Activated CD4-positive, alpha-beta memory T cell treated with anti-CD3 and anti-CD28 coated beads for 36 hours (primary cell): ENCODE measurements at regions of chr20 and their contacts with region 1.

Region 1: GRCh38 chr20:29443819-29444218 is 1813.6 kb upstream of the DEFB115 start:
- DNase-seq: peak; percentile 48
- H3K4me3 Mint-ChIP-seq: no peak overlapping the region
- H3K27ac Mint-ChIP-seq: no peak overlapping the region
- H3K4me1 Mint-ChIP-seq: peaks cover 10% of the 10 kb centered on the region
- H3K27me3 Mint-ChIP-seq: peaks cover 2% of the 10 kb centered on the region

Region 2: GRCh38 chr20:29763821-29764511 is 320.1 kb after region 1 on chr20:
- CTCF ChIA-PET with region 1: no interaction called
- POLR2A ChIA-PET with region 1: no interaction called
- intact Hi-C with region 1: loop called (anchors 10 kb)
- DNase-seq: no peak
- H3K4me3 Mint-ChIP-seq: no peak overlapping the region
- H3K27ac Mint-ChIP-seq: no peak overlapping the region
- H3K4me1 Mint-ChIP-seq: no peaks in the 10 kb centered on the region
- H3K27me3 Mint-ChIP-seq: peaks cover 3% of the 10 kb centered on the region

Region 3: DNA sequence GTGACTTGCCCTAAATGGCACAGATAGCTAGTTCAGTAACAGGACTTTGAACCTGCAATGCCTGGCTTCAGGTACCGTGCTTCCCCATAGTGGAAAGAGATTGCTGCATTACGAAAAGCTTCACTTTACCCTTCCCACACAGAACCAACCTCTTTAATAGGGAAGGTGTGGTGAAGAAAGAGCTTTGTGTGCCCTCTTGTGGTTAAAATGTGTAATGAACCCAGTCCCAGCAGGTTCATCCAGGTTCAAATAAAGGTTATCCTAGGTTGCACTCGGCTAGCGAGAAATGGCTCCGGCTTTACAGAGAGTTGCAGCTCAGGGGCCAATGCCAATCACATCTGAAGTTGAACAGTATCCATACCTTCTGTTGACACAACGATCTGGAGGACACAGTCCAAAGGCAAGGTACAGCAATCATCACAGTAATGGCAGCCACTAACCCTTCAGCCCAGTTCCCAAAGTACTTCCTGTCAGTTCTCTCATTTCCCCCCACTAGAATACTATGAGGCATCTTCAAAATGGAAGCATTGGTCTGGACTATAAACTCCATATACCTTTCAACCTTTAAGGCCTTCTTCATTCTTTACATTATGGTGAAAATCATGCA is 1816.6 kb after region 1 on chr20:
- CTCF ChIA-PET with region 1: no interaction called
- POLR2A ChIA-PET with region 1: no interaction called
- intact Hi-C with region 1: loop called (anchors 10 kb)
- DNase-seq: no peak
- H3K4me3 Mint-ChIP-seq: no peak overlapping the region
- H3K27ac Mint-ChIP-seq: no peak overlapping the region
- H3K4me1 Mint-ChIP-seq: no peaks in the 10 kb centered on the region
- H3K27me3 Mint-ChIP-seq: no peaks in the 10 kb centered on the region